ENCODE measurements at regions of chr12 and their contacts with region 1.

Region 1: DNA sequence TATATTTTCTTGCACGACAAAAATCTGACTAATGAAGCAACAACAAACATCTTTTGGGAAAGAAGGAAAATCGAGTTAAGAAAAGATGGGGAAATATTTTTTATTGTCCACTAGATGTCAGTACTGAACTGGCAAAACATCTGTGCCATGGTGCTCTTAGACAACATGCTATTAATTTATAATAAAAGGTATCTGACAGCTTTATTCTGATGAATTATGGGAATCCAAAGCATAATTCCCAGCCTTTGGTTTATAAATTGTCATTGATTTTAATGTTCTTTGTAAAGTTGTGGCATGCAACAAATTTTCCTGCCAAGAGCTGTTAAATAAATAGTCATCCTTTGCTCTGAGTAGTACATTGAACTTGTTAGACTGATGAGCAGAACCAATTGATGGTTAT is 231.2 kb downstream of the ETNK1 start:
- DNase-seq: peak; percentile 55
- H3K4me3 ChIP-seq: no peak overlapping the region
- H3K27ac ChIP-seq: no peak overlapping the region
- H3K4me1 ChIP-seq: no peaks in the 10 kb centered on the region
- H3K27me3 ChIP-seq: no peaks in the 10 kb centered on the region
- CTCF ChIP-seq: peak; percentile 62

Region 2: GRCh38 chr12:22981711-22982110 is 125.5 kb after region 1 on chr12:
- CTCF ChIA-PET with region 1: no interaction called
- POLR2A ChIA-PET with region 1: no interaction called
- intact Hi-C with region 1: loop called (anchors 5 kb)
- DNase-seq: peak; percentile 24
- H3K4me3 ChIP-seq: no peak overlapping the region
- H3K27ac ChIP-seq: no peak overlapping the region
- H3K4me1 ChIP-seq: no peaks in the 10 kb centered on the region
- H3K27me3 ChIP-seq: peaks cover 84% of the 10 kb centered on the region
- CTCF ChIP-seq: peak; percentile 40; the same call in 1 of the 2 replicates

Region 3: GRCh38 chr12:23055004-23055403 is 198.8 kb after region 1 on chr12:
- CTCF ChIA-PET with region 1: no interaction called
- POLR2A ChIA-PET with region 1: no interaction called
- intact Hi-C with region 1: loop called (anchors 5 kb)
- DNase-seq: peak; percentile 44
- H3K4me3 ChIP-seq: no peak overlapping the region
- H3K27ac ChIP-seq: no peak overlapping the region
- H3K4me1 ChIP-seq: no peaks in the 10 kb centered on the region
- H3K27me3 ChIP-seq: no peaks in the 10 kb centered on the region
- CTCF ChIP-seq: peak; percentile 47

Region 4: DNA sequence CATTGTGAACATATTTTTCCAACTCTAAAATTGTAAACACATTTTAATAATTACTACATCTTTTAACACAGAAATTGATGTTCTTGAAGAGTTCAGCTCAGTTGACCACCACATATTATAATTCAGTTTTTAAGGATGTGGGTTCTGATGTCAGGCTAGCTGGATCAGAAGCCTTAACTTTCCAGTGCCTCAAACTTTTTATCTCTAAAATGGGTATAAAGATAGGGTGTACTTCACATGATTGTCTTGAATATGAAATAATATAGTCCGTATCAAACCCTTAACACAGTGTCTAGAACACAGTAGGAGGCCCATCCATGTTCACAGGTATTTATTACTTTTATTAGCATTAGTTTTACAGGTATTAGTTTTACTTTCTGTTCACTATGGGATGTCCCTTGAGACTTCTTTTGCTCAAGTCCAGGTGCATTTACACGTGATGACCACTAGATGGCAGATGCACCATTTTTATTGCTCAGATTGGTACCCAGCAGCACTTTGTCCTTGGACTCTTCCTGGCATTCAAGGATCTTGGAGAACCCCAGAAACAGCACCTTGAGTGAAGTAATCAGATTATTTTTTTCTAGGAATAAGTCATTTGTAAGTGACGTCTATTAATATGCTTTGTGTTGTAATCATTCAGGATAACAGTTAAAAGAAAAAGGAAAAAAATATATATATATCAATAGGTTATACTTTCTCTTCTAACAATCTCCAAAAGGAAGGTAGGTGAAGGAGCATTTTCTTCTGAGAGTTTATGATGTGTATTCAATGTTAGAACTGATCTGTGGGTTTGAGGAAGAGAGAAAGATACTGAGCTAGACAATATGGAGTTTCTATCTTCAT is 349.0 kb after region 1 on chr12:
- CTCF ChIA-PET with region 1: no interaction called
- POLR2A ChIA-PET with region 1: no interaction called
- intact Hi-C with region 1: loop called (anchors 10 kb)
- DNase-seq: peak; percentile 78
- H3K4me3 ChIP-seq: no peak overlapping the region
- H3K27ac ChIP-seq: no peak overlapping the region
- H3K4me1 ChIP-seq: peaks cover 3% of the 10 kb centered on the region
- H3K27me3 ChIP-seq: no peaks in the 10 kb centered on the region
- CTCF ChIP-seq: peak; percentile 89

Measured in A673 (cell line).